ENCODE measurements at regions of chr11 and their contacts with region 1.

Region 1: GRCh38 chr11:116641561-116642045 is 131.2 kb downstream of the BUD13 start:
- DNase-seq: peak; percentile 40
- H3K4me3 ChIP-seq: no peak overlapping the region
- H3K27ac ChIP-seq: no peak overlapping the region
- H3K4me1 ChIP-seq: no peaks in the 10 kb centered on the region
- H3K27me3 ChIP-seq: no peaks in the 10 kb centered on the region
- CTCF ChIP-seq: peak; percentile 62

Region 2: DNA sequence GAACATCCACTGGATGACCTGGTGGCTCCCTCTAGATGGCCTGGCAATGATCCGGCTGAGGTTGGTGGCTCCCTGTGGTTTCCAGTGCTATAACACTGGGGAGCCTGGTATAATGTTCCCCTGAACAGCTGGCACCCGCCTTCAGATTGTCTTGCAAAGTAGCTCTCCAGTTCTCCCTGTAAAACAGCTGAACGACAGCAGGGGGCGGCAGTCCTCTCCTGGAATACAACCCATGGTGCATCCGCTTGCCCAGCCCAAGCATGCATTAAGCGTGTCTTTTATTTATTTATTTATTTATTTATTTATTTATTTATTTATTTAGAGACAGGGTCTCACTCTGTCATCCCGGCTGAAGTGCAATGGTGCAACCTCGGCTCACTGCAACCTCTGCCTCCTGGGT is 127.7 kb before region 1 on chr11:
- intact Hi-C with region 1: loop called (anchors 2 kb)
- DNase-seq: peak; percentile 59
- H3K4me3 ChIP-seq: no peak overlapping the region
- H3K27ac ChIP-seq: no peak overlapping the region
- H3K4me1 ChIP-seq: no peaks in the 10 kb centered on the region
- H3K27me3 ChIP-seq: no peaks in the 10 kb centered on the region
- CTCF ChIP-seq: peak; percentile 21

Region 3: DNA sequence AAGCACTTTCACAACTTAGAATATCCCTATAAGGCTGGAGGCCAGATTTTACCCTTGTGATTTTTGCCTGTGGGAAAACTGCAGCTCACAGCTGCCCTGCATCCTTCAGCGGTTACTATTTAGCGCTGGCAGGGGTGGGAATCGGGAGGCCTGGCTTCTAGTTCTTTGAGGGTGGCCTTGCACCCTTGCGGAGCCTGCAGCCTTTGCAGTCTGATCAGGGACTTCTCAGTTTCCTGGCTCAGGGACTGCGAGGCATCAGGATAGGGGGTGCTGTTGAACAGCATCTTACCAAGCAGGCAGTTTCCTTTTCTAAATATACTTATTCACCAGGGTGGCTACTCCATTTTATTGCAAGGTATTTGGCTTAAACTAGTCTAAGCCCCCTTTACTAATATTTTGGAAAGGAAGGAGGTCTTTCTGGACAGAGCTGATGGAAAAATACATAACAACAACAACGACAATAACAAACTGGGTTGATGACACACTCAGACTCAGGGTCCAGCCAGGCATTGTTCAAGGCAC is 198.7 kb after region 1 on chr11:
- intact Hi-C with region 1: no loop called
- DNase-seq: no peak
- H3K4me3 ChIP-seq: no peak overlapping the region
- H3K27ac ChIP-seq: no peak overlapping the region
- H3K4me1 ChIP-seq: peaks cover 5% of the 10 kb centered on the region
- H3K27me3 ChIP-seq: no peaks in the 10 kb centered on the region
- CTCF ChIP-seq: no peak

Measured in colonic mucosa (tissue), 4 donors.